Gastrocnemius medialis (tissue), 4 donors: ENCODE measurements at regions of chr1 and their contacts with region 1.

Region 1: GRCh38 chr1:116372587-116373444 is at the start of gene ATP1A1:
- DNase-seq: peak; percentile 96 to 97
- ATAC-seq: peak; percentile 50 to 62
- H3K4me3 ChIP-seq: peak within 1 kb of the TSS; percentile 80 to 93 (median 86)
- H3K27ac ChIP-seq: peak within 1 kb of the TSS; percentile 94 to 98 (median 96)
- H3K4me1 ChIP-seq: peaks cover 28 to 46% of the 10 kb centered on the region in 2 donors
- H3K27me3 ChIP-seq: no peaks in the 10 kb centered on the region
- CTCF ChIP-seq: peak in 3 of 5 experiments; percentile 22 to 49 (median 37)
- POLR2A ChIP-seq: peak; percentile 98 to 99
- total RNA-seq, gene ATP1A1: 103 to 257 (median 204) TPM

Region 2: GRCh38 chr1:114695430-114696058 is 1677.3 kb before region 1 on chr1 and contains the start of gene AMPD1:
- in situ Hi-C with region 1: no loop called
- intact Hi-C with region 1: loop called (anchors 10 kb)
- DNase-seq: no peak
- ATAC-seq: peak; percentile 53 to 74
- H3K4me3 ChIP-seq: peak within 1 kb of the TSS; percentile 24 to 60 (median 42)
- H3K27ac ChIP-seq: peak within 1 kb of the TSS; percentile 88 to 98 (median 91)
- H3K4me1 ChIP-seq: peaks cover 24 to 28% of the 10 kb centered on the region in 2 donors
- H3K27me3 ChIP-seq: no peaks in the 10 kb centered on the region
- CTCF ChIP-seq: no peak
- POLR2A ChIP-seq: peak in 1 of 2 donors; percentile 73
- total RNA-seq, gene AMPD1: 43.5 to 93.4 (median 68.1) TPM

Region 3: GRCh38 chr1:116151739-116152576 is 220.9 kb before region 1 on chr1:
- in situ Hi-C with region 1: loop called in 1 of 4 experiments (anchors 25 kb)
- intact Hi-C with region 1: no loop called
- DNase-seq: peak in 1 of 2 donors; percentile 58
- ATAC-seq: peak; percentile 93 to 97
- H3K4me3 ChIP-seq: peak overlapping the region; percentile 54 to 57 (median 56)
- H3K27ac ChIP-seq: peak overlapping the region; percentile 39 to 60 (median 56)
- H3K4me1 ChIP-seq: peaks cover 5 to 12% of the 10 kb centered on the region in 2 donors
- H3K27me3 ChIP-seq: no peaks in the 10 kb centered on the region
- CTCF ChIP-seq: peak; percentile 83 to 94 (median 91)
- POLR2A ChIP-seq: no peak

Region 4: GRCh38 chr1:116257341-116257767 is 115.5 kb before region 1 on chr1:
- in situ Hi-C with region 1: no loop called
- intact Hi-C with region 1: no loop called
- DNase-seq: no peak
- ATAC-seq: no peak
- H3K4me3 ChIP-seq: no peak overlapping the region
- H3K27ac ChIP-seq: no peak overlapping the region
- H3K4me1 ChIP-seq: no peaks in the 10 kb centered on the region
- H3K27me3 ChIP-seq: no peaks in the 10 kb centered on the region
- CTCF ChIP-seq: no peak
- POLR2A ChIP-seq: no peak

Region 5: GRCh38 chr1:116346943-116347673 is 25.7 kb before region 1 on chr1:
- in situ Hi-C with region 1: no loop called
- intact Hi-C with region 1: loop called (anchors 1 kb)
- DNase-seq: no peak
- ATAC-seq: peak in 1 of 2 donors; percentile 3
- H3K4me3 ChIP-seq: no peak overlapping the region
- H3K27ac ChIP-seq: peak overlapping the region; percentile 57 to 77 (median 72)
- H3K4me1 ChIP-seq: peaks cover 18% of the 10 kb centered on the region in 2 donors
- H3K27me3 ChIP-seq: no peaks in the 10 kb centered on the region
- CTCF ChIP-seq: no peak
- POLR2A ChIP-seq: no peak

Region 6: GRCh38 chr1:116472431-116472961 is 99.7 kb after region 1 on chr1:
- in situ Hi-C with region 1: loop called in 1 of 4 experiments (anchors 25 kb)
- intact Hi-C with region 1: loop called (anchors 1 kb)
- DNase-seq: no peak
- ATAC-seq: no peak
- H3K4me3 ChIP-seq: no peak overlapping the region
- H3K27ac ChIP-seq: no peak overlapping the region
- H3K4me1 ChIP-seq: peaks cover 27 to 32% of the 10 kb centered on the region in 2 donors
- H3K27me3 ChIP-seq: no peaks in the 10 kb centered on the region
- CTCF ChIP-seq: no peak
- POLR2A ChIP-seq: no peak

Region 7: GRCh38 chr1:116570358-116571200 is 197.8 kb after region 1 on chr1 and contains the start of gene CD58:
- in situ Hi-C with region 1: no loop called
- intact Hi-C with region 1: loop called (anchors 5 kb)
- DNase-seq: peak; percentile 70 to 78
- ATAC-seq: peak; percentile 89 to 91
- H3K4me3 ChIP-seq: peak within 1 kb of the TSS; percentile 61 to 86 (median 80)
- H3K27ac ChIP-seq: peak within 1 kb of the TSS; percentile 85 to 97 (median 92)
- H3K4me1 ChIP-seq: peaks cover 11 to 18% of the 10 kb centered on the region in 2 donors
- H3K27me3 ChIP-seq: no peaks in the 10 kb centered on the region
- CTCF ChIP-seq: peak; percentile 60 to 67 (median 62)
- POLR2A ChIP-seq: peak; percentile 73 to 82
- total RNA-seq, gene CD58: 4.1 to 15.9 (median 10.2) TPM

Region 8: GRCh38 chr1:117121776-117122697 is 749.2 kb after region 1 on chr1:
- in situ Hi-C with region 1: no loop called
- intact Hi-C with region 1: loop called (anchors 10 kb)
- DNase-seq: peak; percentile 93 to 97
- ATAC-seq: peak; percentile 84 to 90
- H3K4me3 ChIP-seq: peak overlapping the region; percentile 60 to 85 (median 80)
- H3K27ac ChIP-seq: peak overlapping the region; percentile 87 to 97 (median 92)
- H3K4me1 ChIP-seq: peaks cover 54 to 61% of the 10 kb centered on the region in 2 donors
- H3K27me3 ChIP-seq: no peaks in the 10 kb centered on the region
- CTCF ChIP-seq: peak; percentile 59 to 82 (median 66)
- POLR2A ChIP-seq: peak; percentile 62 to 66